ENCODE measurements at regions of chr15 and their contacts with region 1.

Region 1: DNA sequence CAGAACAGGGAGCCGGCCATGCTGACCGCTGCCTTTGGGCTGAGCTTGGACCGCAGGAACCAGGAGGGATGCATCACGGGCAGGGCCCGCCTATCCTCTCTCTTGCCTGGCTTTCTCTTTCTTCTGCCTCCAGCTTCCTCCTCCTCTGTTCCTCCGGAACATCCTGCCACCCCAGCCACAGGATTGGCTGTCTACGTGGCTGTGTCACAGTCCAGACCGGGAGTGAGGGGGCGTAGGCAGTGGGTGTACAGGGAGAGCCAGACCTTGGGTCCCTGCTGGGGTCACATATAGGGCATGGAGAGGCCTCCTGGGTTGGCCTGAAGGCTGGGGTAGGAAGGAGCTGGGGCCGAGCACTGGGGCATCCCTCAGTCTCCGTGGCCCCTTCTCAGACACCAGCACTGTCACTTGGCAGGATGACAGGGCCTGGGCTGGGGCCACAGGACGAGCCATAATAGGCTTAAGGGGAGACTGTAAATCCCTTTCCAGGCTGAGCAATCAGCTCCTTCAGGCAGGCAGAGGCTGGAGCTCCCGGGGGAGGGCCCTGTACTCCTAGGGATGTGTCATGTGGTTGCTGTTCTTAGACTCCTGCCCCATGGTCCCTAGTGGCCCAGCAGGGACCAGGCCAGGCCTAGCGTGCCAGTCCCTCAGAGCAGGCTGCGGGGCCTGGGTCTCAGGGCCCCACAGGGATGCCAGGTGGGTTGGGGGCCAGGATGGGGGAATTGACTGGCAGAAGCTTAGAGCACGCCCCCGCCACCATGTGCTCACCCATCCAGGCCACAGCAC is 25.4 kb downstream of the LINGO1 start:
- DNase-seq: no peak
- H3K4me3 ChIP-seq: no peak overlapping the region
- H3K27ac ChIP-seq: no peak overlapping the region
- H3K4me1 ChIP-seq: no peaks in the 10 kb centered on the region
- H3K27me3 ChIP-seq: no peaks in the 10 kb centered on the region
- CTCF ChIP-seq: no peak

Region 2: GRCh38 chr15:77702211-77702957 is 95.1 kb after region 1 on chr15:
- CTCF ChIA-PET with region 1: no interaction called
- dilution Hi-C with region 1: loop called (anchors 5 kb)
- in situ Hi-C with region 1: no loop called
- intact Hi-C with region 1: no loop called
- DNase-seq: peak; percentile 21
- H3K4me3 ChIP-seq: no peak overlapping the region
- H3K27ac ChIP-seq: no peak overlapping the region
- H3K4me1 ChIP-seq: no peaks in the 10 kb centered on the region
- H3K27me3 ChIP-seq: no peaks in the 10 kb centered on the region
- CTCF ChIP-seq: no peak

Region 3: GRCh38 chr15:77753270-77753873 is 146.1 kb after region 1 on chr15:
- CTCF ChIA-PET with region 1: no interaction called
- dilution Hi-C with region 1: no loop called
- in situ Hi-C with region 1: no loop called
- intact Hi-C with region 1: no loop called
- DNase-seq: peak; percentile 6
- H3K4me3 ChIP-seq: no peak overlapping the region
- H3K27ac ChIP-seq: no peak overlapping the region
- H3K4me1 ChIP-seq: no peaks in the 10 kb centered on the region
- H3K27me3 ChIP-seq: no peaks in the 10 kb centered on the region
- CTCF ChIP-seq: no peak

Measured in mammary epithelial cell (primary cell).